ENCODE measurements at regions of chr6 and their contacts with region 1.

Region 1: DNA sequence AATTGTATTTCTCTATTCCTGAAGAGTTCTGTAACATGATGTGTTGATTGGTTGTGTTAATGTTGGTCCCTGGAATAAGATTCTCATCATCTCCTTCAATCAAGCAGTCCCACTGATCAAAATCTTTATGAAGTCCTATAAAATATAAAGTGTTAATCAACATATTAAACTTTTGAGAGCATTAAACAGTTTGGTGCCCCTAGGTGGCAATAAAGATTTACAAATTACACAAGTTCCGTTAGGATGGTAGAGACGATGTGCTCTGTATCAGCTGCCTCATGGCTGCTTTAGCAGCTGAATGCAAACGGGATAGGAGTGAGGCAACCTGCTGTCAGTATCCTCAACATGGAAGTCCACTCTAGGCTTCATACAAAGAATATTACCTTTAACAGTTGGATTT is 16.9 kb downstream of the TDRD6 start:
- DNase-seq: peak; percentile 48 to 78 (median 76)
- H3K4me3 ChIP-seq: no peak overlapping the region
- H3K4me3 Mint-ChIP-seq: peak overlapping the region in 1 of 2 donors; percentile 9
- H3K27ac ChIP-seq: no peak overlapping the region
- H3K27ac Mint-ChIP-seq: no peak overlapping the region
- H3K4me1 ChIP-seq: peaks cover 5 to 6% of the 10 kb centered on the region in 2 donors
- H3K4me1 Mint-ChIP-seq: peaks cover 11% of the 10 kb centered on the region
- H3K27me3 ChIP-seq: peaks cover 2 to 13% of the 10 kb centered on the region in 2 donors
- H3K27me3 Mint-ChIP-seq: peaks cover 0 to 4% (median 2%) of the 10 kb centered on the region in 3 donors
- CTCF ChIP-seq: peak; percentile 69

Region 2: GRCh38 chr6:46453741-46454316 is 250.7 kb before region 1 on chr6:
- intact Hi-C with region 1: no loop called
- DNase-seq: no peak
- H3K4me3 ChIP-seq: no peak overlapping the region
- H3K4me3 Mint-ChIP-seq: no peak overlapping the region
- H3K27ac ChIP-seq: no peak overlapping the region
- H3K27ac Mint-ChIP-seq: no peak overlapping the region
- H3K4me1 ChIP-seq: no peaks in the 10 kb centered on the region
- H3K4me1 Mint-ChIP-seq: no peaks in the 10 kb centered on the region
- H3K27me3 ChIP-seq: no peaks in the 10 kb centered on the region
- H3K27me3 Mint-ChIP-seq: peaks cover 0 to 2% (median 0%) of the 10 kb centered on the region in 3 donors
- CTCF ChIP-seq: no peak

Region 3: DNA sequence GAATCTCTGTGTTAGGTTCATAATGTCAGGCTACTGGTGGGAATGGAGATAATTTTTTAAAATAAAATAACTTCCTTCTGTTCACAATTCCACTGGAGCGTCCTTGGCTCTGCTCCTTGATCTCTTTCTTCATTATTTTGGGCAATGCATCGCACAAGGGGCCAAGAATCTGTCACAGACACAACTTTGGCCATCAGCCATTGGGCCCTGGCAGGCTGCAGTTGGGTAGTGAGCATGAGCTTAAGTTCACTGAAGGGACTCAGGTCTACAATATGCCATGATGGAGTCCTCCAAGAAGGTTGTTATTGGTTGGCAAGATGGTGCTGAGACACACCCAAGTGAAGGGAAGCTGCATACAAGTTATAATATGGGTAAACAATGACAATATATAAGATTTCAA is 91.9 kb before region 1 on chr6:
- intact Hi-C with region 1: no loop called
- DNase-seq: no peak
- H3K4me3 ChIP-seq: no peak overlapping the region
- H3K4me3 Mint-ChIP-seq: no peak overlapping the region
- H3K27ac ChIP-seq: no peak overlapping the region
- H3K27ac Mint-ChIP-seq: no peak overlapping the region
- H3K4me1 ChIP-seq: no peaks in the 10 kb centered on the region
- H3K4me1 Mint-ChIP-seq: no peaks in the 10 kb centered on the region
- H3K27me3 ChIP-seq: no peaks in the 10 kb centered on the region
- H3K27me3 Mint-ChIP-seq: peaks cover 0 to 2% (median 0%) of the 10 kb centered on the region in 3 donors
- CTCF ChIP-seq: no peak

Region 4: GRCh38 chr6:46781478-46782378 is 77.2 kb after region 1 on chr6:
- intact Hi-C with region 1: loop called (anchors 2 kb)
- DNase-seq: peak; percentile 69 to 86 (median 82)
- H3K4me3 ChIP-seq: no peak overlapping the region
- H3K4me3 Mint-ChIP-seq: no peak overlapping the region
- H3K27ac ChIP-seq: no peak overlapping the region
- H3K27ac Mint-ChIP-seq: no peak overlapping the region
- H3K4me1 ChIP-seq: peaks cover 0 to 4% of the 10 kb centered on the region in 2 donors
- H3K4me1 Mint-ChIP-seq: peaks cover 7% of the 10 kb centered on the region
- H3K27me3 ChIP-seq: no peaks in the 10 kb centered on the region
- H3K27me3 Mint-ChIP-seq: peaks cover 0 to 5% (median 0%) of the 10 kb centered on the region in 3 donors
- CTCF ChIP-seq: peak; percentile 82

Region 5: DNA sequence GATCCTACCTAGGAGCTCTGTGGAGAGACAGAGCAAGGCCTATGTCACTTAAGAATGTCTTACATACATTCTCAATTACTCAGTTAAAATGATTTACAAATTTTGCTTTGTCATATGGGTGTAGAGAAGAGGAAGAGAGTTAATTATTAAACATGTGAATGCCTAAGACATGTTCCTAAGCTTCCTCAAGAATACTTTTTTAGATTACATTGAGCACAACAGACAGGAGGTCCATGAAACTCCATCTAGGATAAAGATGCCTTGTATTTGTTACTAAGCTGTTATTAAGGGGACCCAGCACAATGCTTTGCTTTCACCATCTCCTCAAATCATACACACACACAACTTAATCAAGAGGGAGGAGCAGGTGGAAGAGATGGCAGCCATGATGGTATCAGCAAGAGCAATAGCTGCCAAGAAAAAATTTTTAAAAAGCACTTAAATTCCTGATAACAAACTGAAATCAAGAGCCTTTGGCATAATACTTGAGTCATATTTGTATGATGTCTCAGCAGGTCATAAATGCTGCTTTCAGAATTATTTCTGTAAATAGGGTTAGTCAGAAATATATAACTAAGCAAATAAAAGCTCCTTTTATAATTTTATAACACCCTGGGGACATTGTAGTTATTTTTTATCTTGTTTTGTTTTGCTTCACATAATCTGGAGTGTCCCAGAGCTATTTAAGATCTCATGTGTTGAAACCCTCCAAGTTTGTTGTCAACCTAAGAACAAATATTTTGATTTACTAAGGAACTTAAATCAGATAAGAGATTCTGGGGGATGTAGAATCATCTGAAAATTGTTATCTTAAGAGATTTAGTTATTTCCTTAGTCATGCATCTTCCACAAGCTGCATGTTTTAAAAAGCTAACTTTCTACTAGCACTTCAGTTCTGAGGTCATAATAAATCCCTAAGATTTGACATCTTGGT is 703.1 kb after region 1 on chr6:
- intact Hi-C with region 1: no loop called
- DNase-seq: no peak
- H3K4me3 ChIP-seq: no peak overlapping the region
- H3K4me3 Mint-ChIP-seq: no peak overlapping the region
- H3K27ac ChIP-seq: no peak overlapping the region
- H3K27ac Mint-ChIP-seq: peak overlapping the region in 1 of 7 donors; percentile 14
- H3K4me1 ChIP-seq: no peaks in the 10 kb centered on the region
- H3K4me1 Mint-ChIP-seq: peaks cover 5% of the 10 kb centered on the region
- H3K27me3 ChIP-seq: no peaks in the 10 kb centered on the region
- H3K27me3 Mint-ChIP-seq: no peaks in the 10 kb centered on the region
- CTCF ChIP-seq: no peak